B cell (primary cell): ENCODE measurements at regions of chr17 and their contacts with region 1.

Region 1: DNA sequence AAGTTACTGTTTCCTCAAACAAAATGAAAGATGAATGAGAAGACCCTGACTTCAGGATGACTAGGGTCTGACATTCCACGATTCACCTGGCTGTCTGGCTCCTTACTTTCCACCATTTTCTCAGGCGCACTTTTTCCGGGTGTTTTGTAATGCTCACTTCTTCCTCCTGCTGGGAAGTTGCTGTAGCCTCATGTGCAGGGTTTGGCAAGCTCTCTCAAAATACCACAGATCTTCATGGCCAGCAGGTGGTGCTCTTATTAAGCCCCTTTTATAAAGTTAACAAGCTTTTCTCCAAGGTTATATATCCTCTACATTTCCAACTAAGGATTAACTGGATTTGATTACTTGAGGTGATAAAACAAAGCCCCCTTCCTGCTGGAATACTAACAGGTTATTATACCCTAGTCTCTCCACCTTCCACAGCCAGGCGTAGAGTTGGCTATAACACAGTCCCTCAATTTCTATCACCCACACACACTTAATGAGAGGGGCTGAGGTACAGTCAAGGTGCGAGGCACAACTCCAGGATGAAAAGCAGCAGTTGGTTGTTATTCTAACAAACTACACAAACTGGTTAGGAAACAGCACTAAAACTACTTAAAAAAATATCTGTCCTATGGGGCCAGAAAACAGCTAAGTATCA is 45.4 kb downstream of the STH start:
- DNase-seq: peak; percentile 67
- ATAC-seq: peak; percentile 36
- H3K4me3 ChIP-seq: no peak overlapping the region
- H3K4me3 Mint-ChIP-seq: no peak overlapping the region
- H3K27ac ChIP-seq: peak overlapping the region in 1 of 2 donors; percentile 5
- H3K27ac Mint-ChIP-seq: peak overlapping the region; percentile 44
- H3K4me1 ChIP-seq: no peaks in the 10 kb centered on the region
- H3K4me1 Mint-ChIP-seq: peaks cover 3% of the 10 kb centered on the region
- H3K27me3 ChIP-seq: no peaks in the 10 kb centered on the region
- H3K27me3 Mint-ChIP-seq: no peaks in the 10 kb centered on the region
- CTCF ChIP-seq: peak; percentile 84

Region 2: GRCh38 chr17:46002311-46002972 is 42.0 kb before region 1 on chr17:
- CTCF ChIA-PET with region 1: interaction called, 50 read pairs
- POLR2A ChIA-PET with region 1: interaction called, 3 read pairs
- intact Hi-C with region 1: loop called (anchors 1 kb)
- DNase-seq: peak; percentile 84
- ATAC-seq: peak; percentile 97
- H3K4me3 ChIP-seq: no peak overlapping the region
- H3K4me3 Mint-ChIP-seq: no peak overlapping the region
- H3K27ac ChIP-seq: no peak overlapping the region
- H3K27ac Mint-ChIP-seq: no peak overlapping the region
- H3K4me1 ChIP-seq: peaks cover 0 to 5% of the 10 kb centered on the region in 2 donors
- H3K4me1 Mint-ChIP-seq: no peaks in the 10 kb centered on the region
- H3K27me3 ChIP-seq: no peaks in the 10 kb centered on the region
- H3K27me3 Mint-ChIP-seq: no peaks in the 10 kb centered on the region
- CTCF ChIP-seq: peak; percentile 92

Region 3: GRCh38 chr17:46020023-46020761 is 24.2 kb before region 1 on chr17:
- CTCF ChIA-PET with region 1: interaction called, 10 read pairs
- POLR2A ChIA-PET with region 1: interaction called, 3 read pairs
- intact Hi-C with region 1: no loop called
- DNase-seq: peak; percentile 83
- ATAC-seq: peak; percentile 96
- H3K4me3 ChIP-seq: no peak overlapping the region
- H3K4me3 Mint-ChIP-seq: peak overlapping the region; percentile 62
- H3K27ac ChIP-seq: peak overlapping the region; percentile 88 to 93
- H3K27ac Mint-ChIP-seq: peak overlapping the region; percentile 98
- H3K4me1 ChIP-seq: peaks cover 24 to 48% of the 10 kb centered on the region in 2 donors
- H3K4me1 Mint-ChIP-seq: peaks cover 38% of the 10 kb centered on the region
- H3K27me3 ChIP-seq: no peaks in the 10 kb centered on the region
- H3K27me3 Mint-ChIP-seq: no peaks in the 10 kb centered on the region
- CTCF ChIP-seq: no peak

Region 4: GRCh38 chr17:46026166-46027047 is 18.0 kb before region 1 on chr17:
- CTCF ChIA-PET with region 1: interaction called, 11 read pairs
- POLR2A ChIA-PET with region 1: interaction called, 5 read pairs
- intact Hi-C with region 1: no loop called
- DNase-seq: peak; percentile 52
- ATAC-seq: peak; percentile 42
- H3K4me3 ChIP-seq: no peak overlapping the region
- H3K4me3 Mint-ChIP-seq: peak overlapping the region; percentile 38
- H3K27ac ChIP-seq: peak overlapping the region; percentile 65 to 69
- H3K27ac Mint-ChIP-seq: peak overlapping the region; percentile 91
- H3K4me1 ChIP-seq: peaks cover 49 to 66% of the 10 kb centered on the region in 2 donors
- H3K4me1 Mint-ChIP-seq: peaks cover 59% of the 10 kb centered on the region
- H3K27me3 ChIP-seq: no peaks in the 10 kb centered on the region
- H3K27me3 Mint-ChIP-seq: no peaks in the 10 kb centered on the region
- CTCF ChIP-seq: no peak

Region 5: DNA sequence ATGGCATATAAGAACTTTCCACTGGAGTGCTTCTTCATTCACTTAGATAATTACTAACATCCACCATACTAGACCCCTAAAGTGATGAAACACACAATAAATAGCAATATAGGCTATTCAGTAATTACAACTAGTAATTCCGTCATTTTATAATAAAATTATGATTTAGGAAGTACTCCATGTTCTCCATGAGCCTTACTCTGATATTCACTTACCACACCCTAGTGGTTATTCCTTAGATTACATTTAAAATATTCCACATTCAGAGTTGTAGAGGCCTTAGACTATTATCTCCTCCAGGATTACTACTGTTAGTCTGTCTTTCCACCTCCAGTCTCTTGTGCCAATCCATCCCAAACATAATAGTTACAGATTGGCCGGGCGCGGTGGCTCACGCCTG is 17.0 kb after region 1 on chr17:
- CTCF ChIA-PET with region 1: interaction called, 24 read pairs
- POLR2A ChIA-PET with region 1: no interaction called
- intact Hi-C with region 1: no loop called
- DNase-seq: peak; percentile 25
- ATAC-seq: no peak
- H3K4me3 ChIP-seq: no peak overlapping the region
- H3K4me3 Mint-ChIP-seq: no peak overlapping the region
- H3K27ac ChIP-seq: no peak overlapping the region
- H3K27ac Mint-ChIP-seq: no peak overlapping the region
- H3K4me1 ChIP-seq: no peaks in the 10 kb centered on the region
- H3K4me1 Mint-ChIP-seq: no peaks in the 10 kb centered on the region
- H3K27me3 ChIP-seq: no peaks in the 10 kb centered on the region
- H3K27me3 Mint-ChIP-seq: no peaks in the 10 kb centered on the region
- CTCF ChIP-seq: peak; percentile 44

Region 6: GRCh38 chr17:46212634-46213435 is 168.4 kb after region 1 on chr17:
- CTCF ChIA-PET with region 1: interaction called, 126 read pairs
- POLR2A ChIA-PET with region 1: no interaction called
- intact Hi-C with region 1: no loop called
- DNase-seq: peak; percentile 79
- ATAC-seq: peak; percentile 51
- H3K4me3 ChIP-seq: no peak overlapping the region
- H3K4me3 Mint-ChIP-seq: no peak overlapping the region
- H3K27ac ChIP-seq: no peak overlapping the region
- H3K27ac Mint-ChIP-seq: no peak overlapping the region
- H3K4me1 ChIP-seq: no peaks in the 10 kb centered on the region
- H3K4me1 Mint-ChIP-seq: peaks cover 5% of the 10 kb centered on the region
- H3K27me3 ChIP-seq: no peaks in the 10 kb centered on the region
- H3K27me3 Mint-ChIP-seq: no peaks in the 10 kb centered on the region
- CTCF ChIP-seq: peak; percentile 91